CD4-positive, alpha-beta memory T cell (primary cell): ENCODE measurements at regions of chr13 and their contacts with region 1.

Region 1: GRCh38 chr13:30132623-30133553 is 174.5 kb downstream of the KATNAL1 start:
- DNase-seq: peak; percentile 91 to 95 (median 93)
- H3K4me3 ChIP-seq: no peak overlapping the region
- H3K4me3 Mint-ChIP-seq: peak overlapping the region in 6 of 8 donors; percentile 17 to 78 (median 63)
- H3K27ac ChIP-seq: no peak overlapping the region
- H3K27ac Mint-ChIP-seq: peak overlapping the region in 6 of 7 donors; percentile 22 to 88 (median 82)
- H3K4me1 ChIP-seq: peaks cover 12% of the 10 kb centered on the region
- H3K4me1 Mint-ChIP-seq: peaks cover 10 to 19% (median 14%) of the 10 kb centered on the region in 4 donors
- H3K27me3 ChIP-seq: no peaks in the 10 kb centered on the region
- H3K27me3 Mint-ChIP-seq: no peaks in the 10 kb centered on the region

Region 2: DNA sequence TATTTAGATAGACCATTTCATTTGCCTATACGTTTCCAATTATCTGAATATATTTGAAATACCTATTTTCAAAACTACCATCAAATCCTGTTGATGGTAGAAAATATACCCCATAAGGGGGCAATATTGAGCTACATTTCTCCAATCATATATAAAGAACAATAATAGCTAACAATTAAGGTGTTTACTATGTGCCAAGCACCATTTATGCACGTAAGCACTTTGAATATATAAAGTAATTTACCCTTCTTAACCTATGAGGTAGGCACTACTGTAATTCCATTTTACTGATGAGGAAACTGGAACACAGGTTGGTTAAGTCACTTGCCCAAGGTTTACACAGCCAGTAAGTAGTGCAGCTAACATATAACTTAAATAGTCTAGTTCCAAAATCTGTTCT is 361.6 kb before region 1 on chr13:
- CTCF ChIA-PET with region 1: interaction called, 18 read pairs
- POLR2A ChIA-PET with region 1: interaction called, 4 read pairs
- intact Hi-C with region 1: no loop called
- DNase-seq: peak in 4 of 5 donors; percentile 49 to 54 (median 52)
- H3K4me3 ChIP-seq: no peak overlapping the region
- H3K4me3 Mint-ChIP-seq: no peak overlapping the region
- H3K27ac ChIP-seq: no peak overlapping the region
- H3K27ac Mint-ChIP-seq: no peak overlapping the region
- H3K4me1 ChIP-seq: no peaks in the 10 kb centered on the region
- H3K4me1 Mint-ChIP-seq: peaks cover 0 to 4% (median 3%) of the 10 kb centered on the region in 4 donors
- H3K27me3 ChIP-seq: no peaks in the 10 kb centered on the region
- H3K27me3 Mint-ChIP-seq: no peaks in the 10 kb centered on the region

Region 3: GRCh38 chr13:30158774-30159445 is 26.0 kb after region 1 on chr13:
- CTCF ChIA-PET with region 1: interaction called, 974 read pairs
- POLR2A ChIA-PET with region 1: interaction called, 440 read pairs
- intact Hi-C with region 1: loop called (anchors 1 kb)
- DNase-seq: peak in 4 of 5 donors; percentile 58 to 61 (median 60)
- H3K4me3 ChIP-seq: no peak overlapping the region
- H3K4me3 Mint-ChIP-seq: peak overlapping the region in 7 of 8 donors; percentile 17 to 69 (median 59)
- H3K27ac ChIP-seq: no peak overlapping the region
- H3K27ac Mint-ChIP-seq: peak overlapping the region in 5 of 7 donors; percentile 7 to 89 (median 74)
- H3K4me1 ChIP-seq: peaks cover 39% of the 10 kb centered on the region
- H3K4me1 Mint-ChIP-seq: peaks cover 26 to 61% (median 41%) of the 10 kb centered on the region in 4 donors
- H3K27me3 ChIP-seq: no peaks in the 10 kb centered on the region
- H3K27me3 Mint-ChIP-seq: no peaks in the 10 kb centered on the region

Region 4: DNA sequence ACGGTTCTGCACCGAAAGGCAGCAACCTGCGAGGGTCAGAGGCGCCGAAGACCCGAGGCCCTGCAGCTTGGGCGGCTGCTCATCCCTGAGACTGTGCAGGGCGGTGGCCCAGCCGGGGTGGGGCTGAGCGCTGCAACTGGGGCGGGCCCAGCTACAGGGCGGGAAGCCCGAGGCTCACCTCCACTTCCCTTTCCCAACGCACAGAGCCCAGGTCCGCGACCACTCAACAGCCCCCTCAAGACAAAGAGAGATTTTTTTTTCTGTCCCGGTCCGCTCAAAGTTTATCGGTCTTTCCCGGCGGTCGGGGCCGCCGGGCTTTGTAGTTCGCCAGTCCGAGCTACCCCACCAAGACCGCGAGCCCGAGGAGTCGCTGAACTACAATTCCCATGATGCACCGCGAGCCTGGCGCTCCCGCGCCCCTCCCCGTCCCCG is 173.9 kb after region 1 on chr13:
- CTCF ChIA-PET with region 1: interaction called, 6 read pairs
- POLR2A ChIA-PET with region 1: no interaction called
- intact Hi-C with region 1: loop called (anchors 1 kb)
- DNase-seq: peak; percentile 88 to 92 (median 89)
- H3K4me3 ChIP-seq: peak overlapping the region; percentile 55 to 79
- H3K4me3 Mint-ChIP-seq: peak overlapping the region; percentile 90 to 93 (median 91)
- H3K27ac ChIP-seq: peak overlapping the region; percentile 68
- H3K27ac Mint-ChIP-seq: peak overlapping the region; percentile 75 to 93 (median 90)
- H3K4me1 ChIP-seq: peaks cover 28% of the 10 kb centered on the region
- H3K4me1 Mint-ChIP-seq: peaks cover 25 to 46% (median 30%) of the 10 kb centered on the region in 4 donors
- H3K27me3 ChIP-seq: no peaks in the 10 kb centered on the region
- H3K27me3 Mint-ChIP-seq: no peaks in the 10 kb centered on the region

Region 5: DNA sequence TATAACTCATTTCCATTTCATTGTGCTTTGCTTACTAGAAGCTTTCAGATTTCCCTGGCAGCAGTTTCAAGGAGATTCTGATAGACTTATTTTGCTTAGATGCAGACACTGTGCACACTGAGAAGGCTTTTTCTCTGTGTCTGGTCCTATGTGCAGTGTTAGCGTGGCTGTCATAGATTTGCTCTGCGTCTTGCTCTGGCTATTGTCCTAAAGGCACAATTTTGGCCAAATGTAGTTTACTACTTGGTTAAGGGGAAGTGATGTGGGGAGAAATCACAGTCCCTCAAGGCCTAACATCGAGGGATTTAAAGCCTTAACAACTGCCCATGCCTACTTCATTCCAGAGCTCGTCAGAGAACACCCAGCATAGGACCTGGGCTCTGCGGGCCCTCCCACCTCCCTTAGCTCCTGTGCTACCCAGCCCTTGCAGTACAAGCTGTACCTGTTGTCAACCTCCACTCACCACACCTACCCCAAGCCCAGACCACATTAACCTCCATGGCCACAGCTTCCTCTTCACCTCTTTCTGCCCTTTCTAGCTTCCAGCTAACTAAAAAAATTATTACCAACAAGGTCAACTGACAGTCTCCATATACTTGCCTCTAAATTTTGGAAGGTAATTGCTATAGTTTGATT is 213.4 kb after region 1 on chr13:
- CTCF ChIA-PET with region 1: interaction called, 13 read pairs
- POLR2A ChIA-PET with region 1: interaction called, 3 read pairs
- intact Hi-C with region 1: no loop called
- DNase-seq: peak; percentile 76 to 82 (median 79)
- H3K4me3 ChIP-seq: peak overlapping the region in 1 of 2 donors; percentile 10
- H3K4me3 Mint-ChIP-seq: peak overlapping the region; percentile 45 to 88 (median 70)
- H3K27ac ChIP-seq: no peak overlapping the region
- H3K27ac Mint-ChIP-seq: peak overlapping the region; percentile 10 to 86 (median 45)
- H3K4me1 ChIP-seq: peaks cover 42% of the 10 kb centered on the region
- H3K4me1 Mint-ChIP-seq: peaks cover 35 to 48% (median 41%) of the 10 kb centered on the region in 4 donors
- H3K27me3 ChIP-seq: no peaks in the 10 kb centered on the region
- H3K27me3 Mint-ChIP-seq: no peaks in the 10 kb centered on the region

Region 6: DNA sequence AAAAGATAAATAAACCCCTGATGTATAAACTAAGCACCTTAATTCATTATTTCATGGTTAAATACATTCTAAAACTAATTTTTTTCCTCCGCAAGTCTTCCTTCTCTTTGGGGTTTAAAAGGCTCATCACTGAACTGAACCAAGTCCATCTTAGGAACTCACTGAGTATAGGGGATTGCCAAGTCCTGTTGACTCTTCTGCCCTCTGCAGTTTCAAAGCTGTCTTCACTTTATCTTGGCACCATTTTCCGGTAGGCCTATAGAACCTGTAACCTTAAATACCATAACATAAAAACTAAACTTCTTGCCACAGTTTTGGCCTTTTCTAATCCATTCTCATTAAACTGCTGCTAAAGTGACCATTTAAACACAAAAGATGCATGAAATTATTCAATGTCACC is 418.3 kb after region 1 on chr13:
- CTCF ChIA-PET with region 1: interaction called, 6 read pairs
- POLR2A ChIA-PET with region 1: no interaction called
- intact Hi-C with region 1: loop called (anchors 1 kb)
- DNase-seq: peak in 4 of 5 donors; percentile 19 to 21 (median 20)
- H3K4me3 ChIP-seq: no peak overlapping the region
- H3K4me3 Mint-ChIP-seq: no peak overlapping the region
- H3K27ac ChIP-seq: no peak overlapping the region
- H3K27ac Mint-ChIP-seq: no peak overlapping the region
- H3K4me1 ChIP-seq: no peaks in the 10 kb centered on the region
- H3K4me1 Mint-ChIP-seq: peaks cover 0 to 3% (median under 1%) of the 10 kb centered on the region in 4 donors
- H3K27me3 ChIP-seq: no peaks in the 10 kb centered on the region
- H3K27me3 Mint-ChIP-seq: no peaks in the 10 kb centered on the region

Region 7: GRCh38 chr13:30581582-30581981 is 448.7 kb after region 1 on chr13:
- CTCF ChIA-PET with region 1: interaction called, 21 read pairs
- POLR2A ChIA-PET with region 1: interaction called, 4 read pairs
- intact Hi-C with region 1: loop called (anchors 1 kb)
- DNase-seq: peak in 4 of 5 donors; percentile 6 to 21 (median 12)
- H3K4me3 ChIP-seq: no peak overlapping the region
- H3K4me3 Mint-ChIP-seq: no peak overlapping the region
- H3K27ac ChIP-seq: no peak overlapping the region
- H3K27ac Mint-ChIP-seq: no peak overlapping the region
- H3K4me1 ChIP-seq: peaks cover 14% of the 10 kb centered on the region
- H3K4me1 Mint-ChIP-seq: peaks cover 11 to 19% (median 16%) of the 10 kb centered on the region in 4 donors
- H3K27me3 ChIP-seq: no peaks in the 10 kb centered on the region
- H3K27me3 Mint-ChIP-seq: peaks cover 0 to 1% of the 10 kb centered on the region in 2 donors